Transverse colon (tissue), 4 donors: ENCODE measurements at regions of chr7 and their contacts with region 1.

Region 1: GRCh38 chr7:28408960-28409715 is 3.2 kb upstream of the CREB5 start:
- DNase-seq: peak; percentile 83
- H3K4me3 ChIP-seq: peak overlapping the region; percentile 35 to 56 (median 41)
- H3K27ac ChIP-seq: peak overlapping the region; percentile 68 to 86 (median 80)
- H3K4me1 ChIP-seq: peaks cover 0 to 23% (median 12%) of the 10 kb centered on the region in 4 donors
- H3K27me3 ChIP-seq: peaks cover 80% of the 10 kb centered on the region
- CTCF ChIP-seq: no peak
- EP300 ChIP-seq: no peak
- POLR2A ChIP-seq: peak; percentile 48

Region 2: GRCh38 chr7:28685644-28686417 is 276.7 kb after region 1 on chr7:
- in situ Hi-C with region 1: loop called in 1 of 4 experiments (anchors 25 kb)
- intact Hi-C with region 1: no loop called
- DNase-seq: peak; percentile 87
- H3K4me3 ChIP-seq: peak overlapping the region in 3 of 4 donors; percentile 17 to 44 (median 26)
- H3K27ac ChIP-seq: peak overlapping the region; percentile 74 to 85 (median 82)
- H3K4me1 ChIP-seq: peaks cover 0 to 29% (median 13%) of the 10 kb centered on the region in 4 donors
- H3K27me3 ChIP-seq: peaks cover 9% of the 10 kb centered on the region
- CTCF ChIP-seq: no peak
- EP300 ChIP-seq: no peak
- POLR2A ChIP-seq: peak; percentile 67